ENCODE measurements at regions of chr20 and their contacts with region 1.

Region 1: DNA sequence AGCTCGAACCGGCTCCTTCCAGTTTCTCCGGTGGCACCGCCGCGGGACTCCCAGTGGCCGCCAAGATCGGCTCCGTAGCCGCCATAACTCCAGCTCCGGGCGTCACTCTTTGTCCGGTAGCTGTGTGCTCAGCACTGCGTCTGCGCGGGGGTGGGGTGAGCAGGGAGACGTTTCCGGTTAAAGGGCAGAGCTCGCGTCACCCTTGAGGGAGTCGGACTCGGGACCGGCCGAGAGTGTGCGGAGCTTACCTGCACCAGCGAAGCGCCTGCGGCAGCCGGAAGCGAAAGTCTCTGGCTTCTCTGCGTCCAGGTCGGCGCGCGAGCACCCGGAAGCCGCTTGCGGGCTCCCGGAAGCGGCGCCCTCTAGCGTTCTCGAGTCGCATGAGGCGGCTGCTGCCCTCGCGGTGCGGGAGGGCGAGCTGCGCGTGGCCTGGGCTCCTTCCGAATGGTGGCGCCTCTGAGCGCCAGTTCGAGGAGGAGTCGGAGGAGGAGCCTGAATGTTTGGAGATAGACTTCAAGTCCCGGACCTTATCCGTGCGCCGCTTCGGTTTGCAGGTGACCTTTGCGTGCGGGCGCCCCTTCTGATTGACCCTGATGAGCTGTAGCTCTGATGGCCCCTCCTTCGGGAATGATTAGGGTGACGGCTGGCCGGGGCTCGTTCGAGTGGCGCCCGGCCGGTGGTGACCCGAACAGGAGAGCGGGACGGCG is at the start of gene SCAND1:
- DNase-seq: peak; percentile 96 to 99
- H3K4me3 ChIP-seq: peak within 1 kb of the TSS; percentile 99
- H3K27ac ChIP-seq: peak within 1 kb of the TSS; percentile 98
- H3K4me1 ChIP-seq: peaks cover 28% of the 10 kb centered on the region
- H3K27me3 ChIP-seq: no peaks in the 10 kb centered on the region
- CTCF ChIP-seq: peak; percentile 85
- total RNA-seq, gene SCAND1: 56.6 and 95.0 TPM in 2 replicates

Region 2: DNA sequence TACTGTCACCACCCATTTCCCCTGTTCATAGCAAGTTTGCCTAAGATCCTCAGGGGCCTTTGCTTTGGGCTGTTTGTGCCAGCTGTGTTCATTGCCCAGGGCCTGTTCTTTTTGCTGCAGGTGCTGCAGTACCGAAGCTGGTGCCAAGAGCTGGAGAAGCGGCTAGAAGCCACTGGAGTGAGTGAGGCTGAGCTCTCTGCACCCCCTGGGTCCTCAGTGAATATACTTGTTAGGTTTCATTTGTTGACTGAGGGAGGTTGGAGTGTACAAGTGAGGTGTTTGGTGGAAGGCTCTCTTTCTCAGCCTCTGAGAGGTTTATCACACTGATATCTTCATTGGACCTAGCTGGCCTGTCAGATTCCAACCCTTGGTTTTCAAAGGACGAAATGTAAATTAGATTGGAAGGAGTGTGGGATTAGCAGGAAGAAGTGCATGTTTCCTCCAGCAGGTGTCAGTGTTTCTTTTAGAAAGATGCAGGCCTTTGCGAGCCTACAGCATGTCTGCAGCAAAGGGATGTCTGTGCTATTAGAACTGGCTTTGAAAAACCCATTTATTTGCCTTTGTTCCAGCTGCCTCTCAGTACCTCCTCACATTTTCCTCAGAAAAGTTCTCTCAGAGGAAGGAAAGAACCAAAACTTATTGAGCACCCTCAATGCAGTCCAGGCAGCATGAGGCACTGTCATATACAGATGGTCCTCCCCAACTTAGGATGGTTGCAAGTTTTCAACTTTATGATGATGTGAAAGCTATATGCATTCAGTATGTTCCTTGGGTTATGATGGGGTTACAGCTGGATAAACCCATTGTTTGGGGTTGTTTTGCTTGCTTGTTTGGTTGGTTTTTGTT is 490.7 kb before region 1 on chr20:
- CTCF ChIA-PET with region 1: no interaction called
- POLR2A ChIA-PET with region 1: no interaction called
- intact Hi-C with region 1: loop called (anchors 10 kb)
- DNase-seq: peak; percentile 56 to 60
- H3K4me3 ChIP-seq: no peak overlapping the region
- H3K27ac ChIP-seq: no peak overlapping the region
- H3K4me1 ChIP-seq: peaks cover 26% of the 10 kb centered on the region
- H3K27me3 ChIP-seq: no peaks in the 10 kb centered on the region
- CTCF ChIP-seq: peak; percentile 83

Region 3: DNA sequence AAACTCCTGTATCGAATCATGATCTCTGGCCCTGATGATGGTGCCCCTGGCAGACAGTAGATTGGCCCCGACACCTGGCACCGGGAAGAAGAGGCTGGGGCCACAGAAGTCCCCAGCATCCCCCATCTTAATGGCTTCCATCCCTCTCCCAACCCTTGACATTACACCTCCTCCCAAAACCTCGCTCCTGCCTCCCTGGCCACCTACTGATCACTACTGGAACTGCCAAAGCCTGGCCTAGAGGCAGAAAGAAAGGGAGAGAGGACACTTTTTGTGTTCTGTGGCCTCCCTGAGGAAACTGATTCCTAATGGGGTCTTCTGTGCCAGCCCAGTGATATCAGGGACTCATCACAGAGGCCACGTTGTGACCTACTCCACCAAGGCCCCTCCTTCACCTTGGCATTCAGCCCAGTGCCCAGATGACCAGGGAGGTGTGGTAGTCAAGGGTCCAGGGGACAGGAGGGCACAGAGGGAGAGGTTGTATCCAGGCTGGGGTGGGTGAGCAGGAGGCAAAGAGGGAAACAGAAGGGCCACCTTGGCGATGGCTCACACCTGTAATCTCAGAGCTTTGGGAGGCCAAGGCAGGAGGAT is 431.0 kb before region 1 on chr20:
- CTCF ChIA-PET with region 1: interaction called, 15 read pairs
- POLR2A ChIA-PET with region 1: no interaction called
- intact Hi-C with region 1: no loop called
- DNase-seq: peak in 1 of 2 experiments; percentile 27
- H3K4me3 ChIP-seq: no peak overlapping the region
- H3K27ac ChIP-seq: no peak overlapping the region
- H3K4me1 ChIP-seq: no peaks in the 10 kb centered on the region
- H3K27me3 ChIP-seq: no peaks in the 10 kb centered on the region
- CTCF ChIP-seq: peak; percentile 70

Measured in PC-9 (cell line).